Body of pancreas (tissue), 4 donors: ENCODE measurements at regions of chr3 and their contacts with region 1.

Region 1: GRCh38 chr3:45037734-45038455 is 11.8 kb downstream of the CLEC3B start:
- DNase-seq: peak; percentile 93 to 97 (median 95)
- ATAC-seq: peak; percentile 93
- H3K4me3 ChIP-seq: no peak overlapping the region
- H3K27ac ChIP-seq: no peak overlapping the region
- H3K4me1 ChIP-seq: peaks cover 8% of the 10 kb centered on the region
- H3K27me3 ChIP-seq: no peaks in the 10 kb centered on the region
- CTCF ChIP-seq: peak; percentile 80 to 99 (median 99)
- POLR2A ChIP-seq: no peak

Region 2: GRCh38 chr3:45105855-45106671 is 68.2 kb after region 1 on chr3:
- intact Hi-C with region 1: no loop called
- DNase-seq: no peak
- ATAC-seq: no peak
- H3K4me3 ChIP-seq: no peak overlapping the region
- H3K27ac ChIP-seq: no peak overlapping the region
- H3K4me1 ChIP-seq: no peaks in the 10 kb centered on the region
- H3K27me3 ChIP-seq: no peaks in the 10 kb centered on the region
- CTCF ChIP-seq: no peak
- POLR2A ChIP-seq: no peak

Region 3: DNA sequence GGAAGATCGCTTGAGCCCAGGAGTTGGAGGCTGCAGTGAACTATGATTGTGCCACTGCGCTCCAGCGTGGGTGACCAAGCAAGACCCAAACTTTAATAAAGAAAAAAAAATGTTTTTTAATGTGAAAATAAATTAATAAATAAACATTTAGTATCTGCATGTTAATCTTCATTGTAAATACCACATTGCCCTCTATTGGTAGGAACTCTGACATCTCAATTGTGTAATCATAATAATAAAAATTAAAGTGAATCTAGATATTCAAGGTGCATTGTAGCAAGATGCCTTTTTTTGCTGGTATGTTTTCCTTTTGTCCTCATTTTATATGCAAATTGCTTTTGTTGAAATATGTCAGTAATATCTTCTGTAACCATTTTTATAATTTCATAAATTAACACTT is 461.6 kb after region 1 on chr3:
- intact Hi-C with region 1: loop called (anchors 10 kb)
- DNase-seq: no peak
- ATAC-seq: no peak
- H3K4me3 ChIP-seq: no peak overlapping the region
- H3K27ac ChIP-seq: no peak overlapping the region
- H3K4me1 ChIP-seq: no peaks in the 10 kb centered on the region
- H3K27me3 ChIP-seq: no peaks in the 10 kb centered on the region
- CTCF ChIP-seq: peak in 6 of 7 experiments; percentile 29 to 58 (median 40)
- POLR2A ChIP-seq: no peak